Mammary epithelial cell (primary cell): ENCODE measurements at regions of chr15 and their contacts with region 1.

Region 1: GRCh38 chr15:87121391-87122055 is 1041.9 kb downstream of the AGBL1 start:
- DNase-seq: peak; percentile 36
- H3K4me3 ChIP-seq: no peak overlapping the region
- H3K27ac ChIP-seq: no peak overlapping the region
- H3K4me1 ChIP-seq: no peaks in the 10 kb centered on the region
- H3K27me3 ChIP-seq: no peaks in the 10 kb centered on the region
- CTCF ChIP-seq: no peak

Region 2: DNA sequence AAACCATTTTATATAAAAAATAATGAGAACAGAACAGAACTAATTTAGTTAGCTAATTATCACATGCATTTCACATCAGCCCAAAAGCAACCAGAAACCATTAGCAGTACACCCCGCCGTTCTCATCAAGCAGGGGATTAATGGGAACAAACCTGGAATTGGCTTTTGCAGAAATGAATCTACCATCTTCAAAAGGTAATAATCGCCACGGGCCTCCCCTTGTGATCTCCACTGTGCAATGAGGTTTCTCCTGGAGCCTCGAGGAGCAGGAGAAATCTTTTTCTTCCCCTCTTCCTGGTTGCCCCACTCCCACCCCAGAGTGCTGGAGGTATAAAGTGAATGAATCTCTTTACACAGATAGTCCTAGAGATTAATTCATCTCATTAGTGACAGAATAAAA is 38.3 kb before region 1 on chr15:
- CTCF ChIA-PET with region 1: interaction called, 19 read pairs
- dilution Hi-C with region 1: no loop called
- in situ Hi-C with region 1: no loop called
- intact Hi-C with region 1: no loop called
- DNase-seq: no peak
- H3K4me3 ChIP-seq: no peak overlapping the region
- H3K27ac ChIP-seq: no peak overlapping the region
- H3K4me1 ChIP-seq: no peaks in the 10 kb centered on the region
- H3K27me3 ChIP-seq: no peaks in the 10 kb centered on the region
- CTCF ChIP-seq: no peak

Region 3: GRCh38 chr15:87752250-87752951 is 630.9 kb after region 1 on chr15:
- CTCF ChIA-PET with region 1: no interaction called
- dilution Hi-C with region 1: no loop called
- in situ Hi-C with region 1: no loop called
- intact Hi-C with region 1: no loop called
- DNase-seq: peak; percentile 84
- H3K4me3 ChIP-seq: no peak overlapping the region
- H3K27ac ChIP-seq: no peak overlapping the region
- H3K4me1 ChIP-seq: peaks cover 10% of the 10 kb centered on the region
- H3K27me3 ChIP-seq: no peaks in the 10 kb centered on the region
- CTCF ChIP-seq: no peak